CD8-positive, alpha-beta memory T cell (primary cell): ENCODE measurements at regions of chr10 and their contacts with region 1.

Region 1: DNA sequence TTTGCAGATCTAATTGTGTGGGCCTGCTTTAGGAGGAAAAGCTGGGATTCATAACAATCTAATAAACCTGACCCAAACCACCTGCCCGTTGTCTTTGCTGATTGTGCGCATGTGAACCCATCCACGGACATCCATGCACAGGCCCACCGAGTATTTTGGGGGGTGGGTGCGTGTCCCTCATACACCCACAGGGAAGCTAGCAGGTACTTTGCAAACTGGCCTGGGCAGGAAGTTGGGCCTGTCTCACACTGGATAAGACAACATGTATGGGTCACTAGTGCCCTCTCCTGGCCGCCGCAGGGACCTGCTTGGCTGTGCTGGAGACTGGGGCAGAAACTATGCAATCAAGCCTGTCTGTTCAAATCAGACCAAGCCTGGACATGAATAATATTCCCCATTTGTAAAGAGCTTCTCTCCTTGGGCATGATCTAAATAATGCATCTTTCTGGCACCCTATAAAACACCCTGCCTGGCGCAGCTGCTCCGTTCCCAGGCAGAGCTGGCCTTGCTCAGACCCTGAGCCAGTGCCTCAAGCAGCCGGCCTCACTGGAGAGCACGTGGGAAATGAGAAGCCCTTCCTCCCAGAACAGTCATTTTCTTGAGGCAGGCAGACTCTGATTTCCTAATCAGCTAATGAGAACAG is 15.8 kb downstream of the ECHDC3 start:
- DNase-seq: peak; percentile 61 to 85 (median 68)
- H3K4me3 ChIP-seq: no peak overlapping the region
- H3K4me3 Mint-ChIP-seq: no peak overlapping the region
- H3K27ac ChIP-seq: no peak overlapping the region
- H3K27ac Mint-ChIP-seq: peak overlapping the region in 1 of 8 donors; percentile 29
- H3K4me1 ChIP-seq: no peaks in the 10 kb centered on the region
- H3K4me1 Mint-ChIP-seq: peaks cover 0 to 3% (median 3%) of the 10 kb centered on the region in 3 donors
- H3K27me3 ChIP-seq: no peaks in the 10 kb centered on the region
- H3K27me3 Mint-ChIP-seq: peaks cover 4 to 9% of the 10 kb centered on the region in 2 donors

Region 2: DNA sequence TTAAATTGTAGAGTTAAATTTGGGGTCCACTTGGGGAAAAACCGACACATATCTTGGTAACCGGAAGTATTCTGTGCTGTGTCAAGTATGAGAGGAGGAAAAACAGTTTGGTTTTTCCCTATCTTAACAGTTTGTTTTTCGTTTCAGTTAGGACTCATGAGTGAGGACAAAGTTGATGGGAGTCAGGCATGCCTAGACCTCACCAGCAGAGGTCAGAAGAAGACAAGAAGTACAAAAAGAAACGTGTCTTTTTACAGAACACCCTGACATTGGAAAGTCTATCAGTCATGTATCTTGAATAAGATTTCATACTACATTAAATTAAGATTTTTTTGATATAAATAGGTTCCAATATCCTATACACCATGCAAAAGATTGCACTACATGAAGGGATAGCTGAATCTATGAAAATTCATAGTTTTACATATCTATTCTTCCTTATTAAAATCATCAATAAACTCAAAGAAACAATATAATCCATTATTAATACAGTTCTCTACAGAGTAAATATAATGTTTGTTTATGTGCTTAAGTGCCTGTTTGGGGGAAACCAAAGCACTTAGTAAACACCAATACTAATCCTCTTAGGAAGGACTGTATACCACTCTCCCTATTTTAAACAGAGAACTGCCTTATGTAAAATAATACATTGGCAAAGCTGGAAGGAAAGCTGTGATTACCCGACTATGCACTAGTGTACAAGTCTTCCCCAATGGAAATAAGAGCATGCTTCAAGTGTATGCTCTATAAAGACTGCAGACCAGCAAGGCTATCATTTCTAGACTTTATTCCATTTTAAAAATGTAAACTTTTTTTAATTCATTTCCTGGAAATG is 242.1 kb before region 1 on chr10:
- CTCF ChIA-PET with region 1: interaction called, 44 read pairs
- POLR2A ChIA-PET with region 1: no interaction called
- DNase-seq: peak in 4 of 5 donors; percentile 27 to 60 (median 41)
- H3K4me3 ChIP-seq: no peak overlapping the region
- H3K4me3 Mint-ChIP-seq: no peak overlapping the region
- H3K27ac ChIP-seq: no peak overlapping the region
- H3K27ac Mint-ChIP-seq: no peak overlapping the region
- H3K4me1 ChIP-seq: no peaks in the 10 kb centered on the region
- H3K4me1 Mint-ChIP-seq: peaks cover 0 to 4% (median 4%) of the 10 kb centered on the region in 3 donors
- H3K27me3 ChIP-seq: no peaks in the 10 kb centered on the region
- H3K27me3 Mint-ChIP-seq: peaks cover 0 to 5% of the 10 kb centered on the region in 2 donors

Region 3: DNA sequence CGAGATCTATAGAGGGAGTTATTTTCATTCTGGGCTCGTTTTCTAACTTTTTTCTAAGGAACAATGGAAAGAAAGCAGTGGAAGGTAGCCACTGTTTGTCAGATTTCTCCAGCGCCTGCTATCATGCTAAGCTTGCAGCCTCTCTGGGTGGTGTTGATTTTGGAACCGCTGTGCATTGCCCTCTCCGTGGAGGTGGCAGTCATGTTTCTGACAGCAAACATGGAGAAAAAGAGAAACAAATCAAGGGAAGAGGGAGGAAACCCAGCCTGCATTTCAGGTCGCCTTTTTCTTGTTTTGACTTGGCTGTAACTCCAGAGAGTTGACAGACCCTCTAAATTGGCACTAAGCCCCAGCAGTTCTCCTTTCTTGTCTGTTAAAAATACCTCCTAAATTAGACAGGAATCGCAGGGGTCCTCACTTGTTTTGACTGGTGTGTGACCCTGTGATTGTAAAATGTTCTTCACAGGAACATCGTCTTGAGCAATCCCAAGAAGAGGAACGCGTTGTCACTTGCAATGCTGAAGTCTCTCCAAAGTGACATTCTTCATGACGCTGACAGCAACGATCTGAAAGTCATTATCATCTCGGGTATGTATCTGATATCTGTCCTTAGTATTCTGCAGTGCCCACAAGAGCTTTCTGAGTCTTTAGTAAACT is 10.9 kb before region 1 on chr10:
- CTCF ChIA-PET with region 1: interaction called, 11 read pairs
- POLR2A ChIA-PET with region 1: no interaction called
- DNase-seq: no peak
- H3K4me3 ChIP-seq: no peak overlapping the region
- H3K4me3 Mint-ChIP-seq: no peak overlapping the region
- H3K27ac ChIP-seq: no peak overlapping the region
- H3K27ac Mint-ChIP-seq: no peak overlapping the region
- H3K4me1 ChIP-seq: no peaks in the 10 kb centered on the region
- H3K4me1 Mint-ChIP-seq: peaks cover 4 to 6% (median 6%) of the 10 kb centered on the region in 3 donors
- H3K27me3 ChIP-seq: no peaks in the 10 kb centered on the region
- H3K27me3 Mint-ChIP-seq: peaks cover 7 to 8% of the 10 kb centered on the region in 2 donors

Region 4: DNA sequence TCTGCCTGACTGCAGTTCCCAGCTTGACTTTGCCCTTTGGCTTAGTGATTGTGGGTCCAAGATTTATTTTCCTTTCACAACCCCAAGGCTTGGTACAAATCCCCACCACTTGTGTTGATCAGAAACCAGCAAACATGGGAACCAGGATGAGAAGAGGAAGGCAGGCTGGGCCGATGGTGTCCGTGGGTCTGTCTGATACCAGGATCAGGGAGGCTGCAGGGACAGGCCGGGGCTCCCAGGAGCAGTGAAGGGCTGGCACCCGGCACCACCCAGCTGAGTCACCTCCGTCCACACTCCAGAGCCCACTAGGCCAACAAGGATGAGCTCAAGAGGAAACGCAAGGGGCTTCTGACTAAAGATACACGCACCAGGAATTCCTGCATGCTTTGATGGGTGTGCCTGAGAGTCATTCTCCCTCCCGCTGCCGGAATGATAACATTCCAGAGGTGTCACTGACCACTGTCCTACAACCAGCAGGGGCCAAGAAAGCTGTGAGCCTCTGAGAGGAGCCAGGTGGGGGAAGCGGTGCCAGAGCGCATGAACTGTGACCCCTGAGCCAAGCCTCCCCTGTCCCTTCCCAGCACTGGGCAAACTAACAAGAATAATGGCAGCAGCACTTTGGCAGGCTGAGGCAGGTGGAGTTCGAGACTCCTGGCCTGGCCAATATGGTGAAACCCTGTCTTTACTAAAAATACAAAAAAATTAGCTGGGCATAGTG is 36.0 kb after region 1 on chr10:
- CTCF ChIA-PET with region 1: no interaction called
- POLR2A ChIA-PET with region 1: no interaction called
- DNase-seq: no peak
- H3K4me3 ChIP-seq: no peak overlapping the region
- H3K4me3 Mint-ChIP-seq: no peak overlapping the region
- H3K27ac ChIP-seq: no peak overlapping the region
- H3K27ac Mint-ChIP-seq: peak overlapping the region in 1 of 8 donors; percentile 63
- H3K4me1 ChIP-seq: no peaks in the 10 kb centered on the region
- H3K4me1 Mint-ChIP-seq: no peaks in the 10 kb centered on the region
- H3K27me3 ChIP-seq: no peaks in the 10 kb centered on the region
- H3K27me3 Mint-ChIP-seq: peaks cover 11 to 15% of the 10 kb centered on the region in 2 donors